ENCODE measurements at regions of chr5 and their contacts with region 1.

Region 1: DNA sequence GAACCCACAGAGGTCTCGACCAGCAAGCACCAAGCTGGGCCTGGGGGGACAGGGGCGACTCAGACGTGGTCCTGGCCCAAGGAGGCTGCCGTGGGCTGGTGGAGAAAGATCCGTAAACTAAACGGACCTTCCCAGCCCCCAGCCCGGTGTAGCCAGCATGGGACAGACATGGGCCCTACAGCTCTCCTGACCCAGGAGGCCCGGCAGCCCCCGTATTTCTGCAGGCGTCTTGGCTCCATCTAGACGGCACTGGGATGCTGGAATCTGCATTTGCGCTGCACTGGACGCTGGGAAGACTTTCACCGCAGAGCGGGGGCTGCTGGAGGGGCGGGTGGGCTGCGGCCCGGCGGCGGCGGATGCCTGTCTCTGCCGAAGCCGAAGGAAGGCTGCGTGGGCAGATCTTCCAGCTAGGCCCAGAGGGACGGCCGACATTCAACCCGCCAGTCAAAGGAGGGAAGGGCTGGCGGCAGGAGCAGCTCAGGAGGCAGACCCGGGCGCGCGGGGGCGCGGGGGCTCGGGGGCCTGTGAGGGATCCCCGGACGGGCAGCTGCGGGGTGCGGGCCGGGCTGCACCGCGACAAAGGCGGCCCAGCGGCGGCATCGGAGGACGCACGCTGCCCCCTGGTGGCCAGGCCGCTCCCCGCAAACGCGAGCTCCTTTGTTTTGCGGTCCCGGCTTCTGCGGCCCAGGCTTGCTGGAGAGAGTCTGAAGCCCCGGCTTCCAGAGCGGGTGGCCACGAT is 266.2 kb downstream of the NSG2 start:
- DNase-seq: peak; percentile 36

Region 2: GRCh38 chr5:173615884-173616576 is 695.7 kb before region 1 on chr5:
- in situ Hi-C with region 1: loop called (anchors 25 kb)
- DNase-seq: peak; percentile 75

Region 3: DNA sequence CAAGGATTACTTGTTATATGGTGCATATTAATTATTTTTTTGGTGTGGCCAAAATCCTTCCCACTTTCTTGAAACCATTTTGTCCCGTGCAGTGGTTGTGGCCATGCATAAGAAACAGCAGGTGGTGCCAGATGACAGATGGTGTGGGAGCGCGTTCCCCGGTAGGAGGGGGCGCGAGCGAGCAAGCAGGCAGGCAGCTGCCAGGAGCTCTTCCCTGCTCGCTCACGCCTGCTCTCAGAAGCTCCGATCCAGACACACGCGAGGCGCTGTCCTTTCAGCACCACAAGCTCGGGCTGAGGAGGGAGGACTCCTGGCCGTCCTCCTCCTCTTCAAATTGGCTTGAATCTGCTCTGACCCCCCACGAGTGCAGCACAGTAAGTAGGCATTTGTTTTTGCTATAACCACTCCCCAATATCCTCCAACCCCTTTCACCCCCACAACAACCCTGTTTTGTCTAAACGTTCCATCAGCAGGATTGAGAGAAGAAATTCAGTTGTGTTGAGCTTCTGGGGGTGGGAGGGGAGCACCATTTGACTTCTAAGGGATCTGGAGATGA is 266.2 kb before region 1 on chr5 and contains the start of gene NSG2:
- in situ Hi-C with region 1: loop called (anchors 25 kb)
- DNase-seq: peak; percentile 85